Right cardiac atrium (tissue), 5 donors: ENCODE measurements at regions of chr1 and their contacts with region 1.

Region 1: DNA sequence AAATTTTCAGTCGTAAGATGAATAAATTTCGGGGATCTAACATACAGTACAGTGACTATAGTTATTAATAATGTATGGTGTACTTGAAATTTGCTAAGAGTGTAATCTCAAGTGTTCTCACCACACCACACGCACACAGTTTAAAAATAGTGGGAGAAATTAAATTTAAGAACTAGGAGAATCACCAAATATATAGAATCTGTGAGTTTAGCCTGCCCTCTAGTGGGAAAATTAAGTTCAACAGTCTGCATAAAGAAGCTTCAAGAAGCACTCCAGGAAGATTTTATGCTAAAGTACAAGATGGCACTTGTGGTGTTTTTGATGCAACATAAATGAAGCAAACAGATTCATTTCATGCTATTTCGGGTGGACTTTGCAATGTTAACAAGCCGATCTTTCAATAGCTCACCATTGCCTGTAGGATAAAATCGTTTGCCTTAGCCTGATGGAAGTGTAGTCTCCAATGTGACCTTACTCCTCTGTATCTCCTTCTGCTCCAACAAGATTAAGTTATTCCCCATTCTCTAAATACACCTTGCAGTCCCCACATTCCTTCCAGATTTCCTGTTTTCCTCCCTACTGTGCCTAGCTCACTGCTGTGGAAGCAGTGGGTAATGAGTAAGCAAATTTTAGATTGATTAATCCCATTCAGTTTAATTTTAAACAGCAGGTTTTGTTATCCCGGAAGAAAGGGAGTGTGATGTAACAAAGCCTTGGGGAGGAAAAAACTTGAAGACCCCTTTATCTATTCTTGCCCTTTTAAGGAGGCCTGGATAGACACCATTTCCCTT is 8.7 kb upstream of the PIK3C2B start:
- DNase-seq: no peak
- ATAC-seq: no peak
- H3K4me3 ChIP-seq: no peak overlapping the region
- H3K27ac ChIP-seq: no peak overlapping the region
- H3K4me1 ChIP-seq: no peaks in the 10 kb centered on the region
- H3K27me3 ChIP-seq: no peaks in the 10 kb centered on the region

Region 2: DNA sequence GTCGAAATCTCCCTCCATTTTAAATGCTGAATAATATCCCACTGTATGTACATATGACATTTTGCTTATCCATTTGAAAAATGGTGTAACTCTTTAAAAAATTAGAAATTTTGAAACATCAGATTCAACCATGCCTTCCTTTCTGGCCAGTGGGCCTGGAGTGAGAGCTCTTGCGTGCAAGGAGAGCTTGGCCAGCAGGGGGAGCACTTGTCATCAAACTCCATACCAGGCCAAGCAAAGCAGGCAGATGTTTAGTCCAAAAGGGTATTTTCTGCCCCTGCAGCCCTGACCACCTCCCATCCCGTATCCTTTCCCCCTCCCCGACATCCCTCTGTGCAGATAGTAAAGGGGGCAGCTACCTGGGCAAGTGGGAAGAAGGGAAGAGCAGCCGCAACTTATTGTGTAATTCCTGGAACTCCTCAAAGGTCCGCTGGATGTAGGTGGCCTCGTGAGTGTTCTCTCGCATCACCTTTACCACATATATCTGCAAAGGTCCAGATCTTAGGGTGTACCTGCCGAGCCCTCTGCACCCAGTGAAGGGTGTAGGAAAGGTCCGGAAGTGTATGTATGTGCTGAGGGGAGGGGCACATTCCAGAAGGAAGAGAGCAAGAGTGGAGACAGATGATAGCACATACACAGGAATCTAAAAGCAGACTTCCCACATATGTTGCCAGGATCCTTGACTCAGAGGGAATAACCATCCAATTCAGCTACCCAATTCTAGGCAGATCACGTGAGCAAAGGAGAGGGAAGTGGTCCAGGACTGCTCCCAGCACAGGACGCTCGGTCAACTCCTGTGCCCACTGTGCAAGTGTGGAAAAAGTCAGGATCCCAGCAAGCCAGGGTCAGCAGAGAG is 71.8 kb before region 1 on chr1:
- intact Hi-C with region 1: loop called in 1 of 4 experiments (anchors 5 kb)
- DNase-seq: peak; percentile 88 to 95 (median 89)
- ATAC-seq: peak; percentile 72
- H3K4me3 ChIP-seq: no peak overlapping the region
- H3K27ac ChIP-seq: peak overlapping the region; percentile 1
- H3K4me1 ChIP-seq: peaks cover 2% of the 10 kb centered on the region
- H3K27me3 ChIP-seq: no peaks in the 10 kb centered on the region

Region 3: GRCh38 chr1:204446370-204447111 is 56.8 kb before region 1 on chr1:
- intact Hi-C with region 1: loop called (anchors 2 to 5 kb)
- DNase-seq: peak; percentile 73 to 89 (median 88)
- ATAC-seq: peak; percentile 48 to 65
- H3K4me3 ChIP-seq: no peak overlapping the region
- H3K27ac ChIP-seq: peak overlapping the region; percentile 14
- H3K4me1 ChIP-seq: peaks cover 21% of the 10 kb centered on the region
- H3K27me3 ChIP-seq: no peaks in the 10 kb centered on the region

Region 4: GRCh38 chr1:205003393-205004131 is 500.2 kb after region 1 on chr1:
- intact Hi-C with region 1: no loop called
- DNase-seq: no peak
- ATAC-seq: no peak
- H3K4me3 ChIP-seq: no peak overlapping the region
- H3K27ac ChIP-seq: no peak overlapping the region
- H3K4me1 ChIP-seq: no peaks in the 10 kb centered on the region
- H3K27me3 ChIP-seq: no peaks in the 10 kb centered on the region